Brain microvascular endothelial cell (primary cell): ENCODE measurements at regions of chr1 and their contacts with region 1.

Region 1: GRCh38 chr1:165914136-165914798 is 86.9 kb downstream of the UCK2 start:
- DNase-seq: peak; percentile 81
- H3K4me3 ChIP-seq: no peak overlapping the region
- H3K27ac ChIP-seq: no peak overlapping the region
- H3K27me3 ChIP-seq: no peaks in the 10 kb centered on the region
- CTCF ChIP-seq: peak; percentile 87

Region 2: GRCh38 chr1:165717918-165718515 is 196.2 kb before region 1 on chr1:
- in situ Hi-C with region 1: loop called (anchors 25 kb)
- DNase-seq: peak; percentile 65
- H3K4me3 ChIP-seq: no peak overlapping the region
- H3K27ac ChIP-seq: no peak overlapping the region
- H3K27me3 ChIP-seq: no peaks in the 10 kb centered on the region
- CTCF ChIP-seq: peak; percentile 80

Region 3: GRCh38 chr1:165738794-165739193 is 175.5 kb before region 1 on chr1:
- in situ Hi-C with region 1: no loop called
- DNase-seq: no peak
- H3K4me3 ChIP-seq: no peak overlapping the region
- H3K27ac ChIP-seq: no peak overlapping the region
- H3K27me3 ChIP-seq: no peaks in the 10 kb centered on the region
- CTCF ChIP-seq: no peak